ENCODE measurements at regions of chr20 and their contacts with region 1.

Region 1: GRCh38 chr20:35207950-35208611 is 18.4 kb upstream of the MMP24 start:
- DNase-seq: peak; percentile 73
- ATAC-seq: peak; percentile 98

Region 2: DNA sequence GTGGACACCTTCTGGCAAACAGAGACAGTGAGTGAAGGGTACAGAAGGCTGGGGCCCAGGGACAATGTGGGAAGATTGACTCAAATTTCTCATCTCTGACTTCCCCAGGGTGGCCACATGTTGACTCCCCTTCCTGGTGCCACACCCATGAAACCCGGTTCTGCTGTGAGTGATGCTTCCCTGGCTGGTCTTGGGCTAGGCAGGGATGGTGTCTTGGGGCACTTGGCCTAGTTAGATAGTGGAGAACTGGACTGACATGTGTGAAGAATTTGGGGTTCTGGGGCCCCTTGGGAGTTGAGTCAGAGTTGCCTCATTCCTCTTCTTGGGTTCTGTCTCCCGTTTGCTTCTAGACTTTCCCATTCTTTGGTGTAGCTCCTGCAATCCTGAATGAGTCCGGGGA is 286.6 kb before region 1 on chr20:
- intact Hi-C with region 1: no loop called
- DNase-seq: no peak
- ATAC-seq: no peak

Region 3: GRCh38 chr20:35092524-35093266 is 115.4 kb before region 1 on chr20 and contains the start of gene TRPC4AP:
- intact Hi-C with region 1: loop called (anchors 5 kb)
- DNase-seq: peak; percentile 95
- ATAC-seq: peak; percentile 97
- total RNA-seq, gene TRPC4AP: 33.8 TPM

Region 4: GRCh38 chr20:35146920-35147574 is 61.0 kb before region 1 on chr20 and contains the start of gene EDEM2:
- intact Hi-C with region 1: loop called (anchors 2 kb)
- DNase-seq: peak; percentile 96
- ATAC-seq: peak; percentile 97
- total RNA-seq, gene EDEM2: 9.1 TPM